ENCODE measurements at regions of chr1 and their contacts with region 1.

Region 1: DNA sequence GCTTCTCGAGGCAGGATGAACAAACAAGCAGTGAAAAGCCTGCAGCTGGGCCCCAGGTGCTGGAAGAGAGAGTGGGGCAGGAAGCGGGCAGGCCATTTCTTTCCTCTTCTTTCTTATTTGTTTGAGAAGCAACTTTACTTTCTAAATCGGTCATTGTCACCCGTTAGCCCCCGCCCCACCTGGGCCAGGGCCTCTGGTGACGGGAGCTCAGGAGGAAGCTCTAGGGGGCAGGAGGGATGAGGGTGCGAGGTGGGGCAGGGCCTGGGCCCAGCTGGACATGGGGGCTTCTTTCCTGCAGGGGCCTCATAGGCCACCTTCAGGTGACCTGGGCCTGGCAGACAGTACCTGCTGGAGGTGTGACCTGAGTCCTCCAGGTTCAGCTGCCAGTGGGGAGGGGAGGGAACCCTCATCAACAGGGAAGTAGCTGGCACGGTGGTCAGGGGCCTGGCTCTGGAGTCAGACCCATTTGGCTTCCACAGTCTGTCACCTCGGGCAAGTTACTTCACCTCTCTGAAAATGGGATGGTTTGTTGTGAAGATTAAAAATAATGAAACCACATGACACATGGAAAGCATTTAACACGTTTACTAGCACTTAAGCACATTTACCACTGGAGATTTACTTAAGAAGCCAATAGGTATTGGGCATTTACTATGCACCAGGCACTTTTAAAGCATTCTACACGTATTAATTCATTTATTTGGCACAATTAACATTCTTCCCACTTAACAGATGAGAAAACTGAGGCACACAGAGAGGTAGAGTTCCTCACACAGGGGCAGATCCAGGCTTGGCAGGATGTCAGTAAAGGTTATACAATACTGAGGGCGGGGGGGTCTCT is 54.1 kb upstream of the ID3 start:
- DNase-seq: peak in 13 of 14 experiments; percentile 27 to 85 (median 60)
- ATAC-seq: peak; percentile 54
- H3K4me3 ChIP-seq: no peak overlapping the region
- H3K4me3 Mint-ChIP-seq: peak overlapping the region; percentile 51
- H3K27ac ChIP-seq: peak overlapping the region; percentile 71 to 72
- H3K27ac Mint-ChIP-seq: peak overlapping the region; percentile 97
- H3K4me1 ChIP-seq: peaks cover 73% of the 10 kb centered on the region
- H3K4me1 Mint-ChIP-seq: peaks cover 84% of the 10 kb centered on the region
- H3K27me3 ChIP-seq: no peaks in the 10 kb centered on the region
- H3K27me3 Mint-ChIP-seq: no peaks in the 10 kb centered on the region
- CTCF ChIP-seq: no peak

Region 2: GRCh38 chr1:23539698-23540266 is 73.6 kb before region 1 on chr1:
- CTCF ChIA-PET with region 1: no interaction called
- POLR2A ChIA-PET with region 1: interaction called, 10 read pairs
- intact Hi-C with region 1: no loop called
- DNase-seq: peak; percentile 86 to 96 (median 90)
- ATAC-seq: peak; percentile 96
- H3K4me3 ChIP-seq: no peak overlapping the region
- H3K4me3 Mint-ChIP-seq: peak overlapping the region; percentile 11
- H3K27ac ChIP-seq: no peak overlapping the region
- H3K27ac Mint-ChIP-seq: peak overlapping the region; percentile 50
- H3K4me1 ChIP-seq: peaks cover 17% of the 10 kb centered on the region
- H3K4me1 Mint-ChIP-seq: peaks cover 18% of the 10 kb centered on the region
- H3K27me3 ChIP-seq: no peaks in the 10 kb centered on the region
- H3K27me3 Mint-ChIP-seq: no peaks in the 10 kb centered on the region
- CTCF ChIP-seq: peak; percentile 94

Region 3: GRCh38 chr1:23627069-23627735 is 13.8 kb after region 1 on chr1:
- CTCF ChIA-PET with region 1: interaction called, 3 read pairs
- POLR2A ChIA-PET with region 1: interaction called, 176 read pairs
- intact Hi-C with region 1: no loop called
- DNase-seq: peak in 6 of 14 experiments; percentile 30 to 69 (median 62)
- ATAC-seq: peak; percentile 76
- H3K4me3 ChIP-seq: peak overlapping the region; percentile 72
- H3K4me3 Mint-ChIP-seq: peak overlapping the region; percentile 93
- H3K27ac ChIP-seq: peak overlapping the region; percentile 55 to 73
- H3K27ac Mint-ChIP-seq: peak overlapping the region; percentile 94
- H3K4me1 ChIP-seq: peaks cover 57% of the 10 kb centered on the region
- H3K4me1 Mint-ChIP-seq: peaks cover 66% of the 10 kb centered on the region
- H3K27me3 ChIP-seq: no peaks in the 10 kb centered on the region
- H3K27me3 Mint-ChIP-seq: no peaks in the 10 kb centered on the region
- CTCF ChIP-seq: no peak